Activated T-helper 2 cell treated with anti-CD3 and anti-CD28 coated beads, Interferon-gamma antibody, Interleukin-2, Interleukin-4, amounts not matched to agents 10 μg/mL and 5 μg/mL and 100 μg/mL, durations not matched to agents 14 hours and 24 hours and 36 hours (primary cell): ENCODE measurements at regions of chr2 and their contacts with region 1.

Region 1: GRCh38 chr2:48420512-48421197 is 109.3 kb upstream of the STON1 start:
- DNase-seq: peak; percentile 90
- H3K4me3 Mint-ChIP-seq: peak overlapping the region; percentile 43
- H3K27ac Mint-ChIP-seq: peak overlapping the region; percentile 62
- H3K4me1 Mint-ChIP-seq: peaks cover 34% of the 10 kb centered on the region
- H3K27me3 Mint-ChIP-seq: peaks cover 5% of the 10 kb centered on the region

Region 2: GRCh38 chr2:48248241-48248933 is 172.3 kb before region 1 on chr2:
- intact Hi-C with region 1: loop called (anchors 2 kb)
- DNase-seq: no peak
- H3K4me3 Mint-ChIP-seq: no peak overlapping the region
- H3K27ac Mint-ChIP-seq: no peak overlapping the region
- H3K4me1 Mint-ChIP-seq: peaks cover 9% of the 10 kb centered on the region
- H3K27me3 Mint-ChIP-seq: peaks cover 5% of the 10 kb centered on the region

Region 3: GRCh38 chr2:48343571-48344440 is 76.8 kb before region 1 on chr2:
- intact Hi-C with region 1: loop called (anchors 1 kb)
- DNase-seq: peak; percentile 16
- H3K4me3 Mint-ChIP-seq: peak overlapping the region; percentile 1
- H3K27ac Mint-ChIP-seq: peak overlapping the region; percentile 61
- H3K4me1 Mint-ChIP-seq: peaks cover 49% of the 10 kb centered on the region
- H3K27me3 Mint-ChIP-seq: no peaks in the 10 kb centered on the region

Region 4: GRCh38 chr2:48356701-48357325 is 63.8 kb before region 1 on chr2:
- intact Hi-C with region 1: loop called (anchors 1 kb)
- DNase-seq: peak; percentile 25
- H3K4me3 Mint-ChIP-seq: peak overlapping the region; percentile 74
- H3K27ac Mint-ChIP-seq: peak overlapping the region; percentile 98
- H3K4me1 Mint-ChIP-seq: peaks cover 53% of the 10 kb centered on the region
- H3K27me3 Mint-ChIP-seq: no peaks in the 10 kb centered on the region